Endothelial cell of umbilical vein (primary cell): ENCODE measurements at regions of chr16 and their contacts with region 1.

Region 1: GRCh38 chr16:19167710-19168370 is at the start of gene SYT17:
- DNase-seq: peak; percentile 65
- H3K4me3 ChIP-seq: peak within 1 kb of the TSS; percentile 7 to 45 (median 44)
- H3K27ac ChIP-seq: no peak within 1 kb of the TSS
- H3K4me1 ChIP-seq: peaks cover 3% of the 10 kb centered on the region
- H3K27me3 ChIP-seq: peaks cover 6 to 32% of the 10 kb centered on the region in 2 experiments
- CTCF ChIP-seq: peak; percentile 75 to 76
- POLR2A ChIP-seq: no peak
- total RNA-seq, gene SYT17: 1.8 and 1.9 TPM in 2 replicates

Region 2: GRCh38 chr16:19086322-19087199 is 81.3 kb before region 1 on chr16:
- CTCF ChIA-PET with region 1: interaction called, 6 read pairs
- POLR2A ChIA-PET with region 1: no interaction called
- dilution Hi-C with region 1: no loop called
- intact Hi-C with region 1: loop called (anchors 1 kb)
- DNase-seq: peak; percentile 95
- H3K4me3 ChIP-seq: peak overlapping the region; percentile 34 to 69 (median 41)
- H3K27ac ChIP-seq: peak overlapping the region; percentile 61
- H3K4me1 ChIP-seq: peaks cover 15% of the 10 kb centered on the region
- H3K27me3 ChIP-seq: no peaks in the 10 kb centered on the region
- CTCF ChIP-seq: peak; percentile 99
- POLR2A ChIP-seq: peak; percentile 94

Region 3: DNA sequence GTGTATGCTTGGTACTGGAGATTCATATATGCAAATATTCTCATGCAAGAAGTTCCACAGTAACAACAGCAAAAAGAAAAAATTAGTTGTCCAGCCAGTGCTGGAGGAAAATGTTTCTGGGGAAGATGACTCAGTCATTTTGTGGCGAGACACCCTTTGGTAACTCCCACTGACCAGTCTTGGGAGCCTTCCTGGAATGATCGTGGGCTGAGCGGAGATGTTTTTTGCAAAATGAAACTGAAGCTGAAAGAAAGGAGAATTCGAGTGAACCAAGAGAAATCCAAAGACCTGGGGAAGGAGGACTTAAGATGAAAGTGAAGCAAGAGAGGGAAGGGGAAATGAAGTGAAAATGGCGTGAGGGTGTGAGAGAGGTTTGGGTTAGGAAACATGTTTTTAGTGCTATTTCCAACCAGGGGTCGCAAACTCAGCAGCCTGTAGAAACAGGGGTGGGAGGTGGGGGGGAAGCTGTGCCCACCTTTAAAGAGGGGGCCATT is 48.9 kb before region 1 on chr16:
- CTCF ChIA-PET with region 1: interaction called, 3 read pairs
- POLR2A ChIA-PET with region 1: no interaction called
- dilution Hi-C with region 1: no loop called
- intact Hi-C with region 1: loop called (anchors 1 kb)
- DNase-seq: peak; percentile 88
- H3K4me3 ChIP-seq: peak overlapping the region; percentile 6 to 49 (median 7)
- H3K27ac ChIP-seq: peak overlapping the region; percentile 85
- H3K4me1 ChIP-seq: peaks cover 49% of the 10 kb centered on the region
- H3K27me3 ChIP-seq: no peaks in the 10 kb centered on the region
- CTCF ChIP-seq: no peak
- POLR2A ChIP-seq: no peak

Region 4: DNA sequence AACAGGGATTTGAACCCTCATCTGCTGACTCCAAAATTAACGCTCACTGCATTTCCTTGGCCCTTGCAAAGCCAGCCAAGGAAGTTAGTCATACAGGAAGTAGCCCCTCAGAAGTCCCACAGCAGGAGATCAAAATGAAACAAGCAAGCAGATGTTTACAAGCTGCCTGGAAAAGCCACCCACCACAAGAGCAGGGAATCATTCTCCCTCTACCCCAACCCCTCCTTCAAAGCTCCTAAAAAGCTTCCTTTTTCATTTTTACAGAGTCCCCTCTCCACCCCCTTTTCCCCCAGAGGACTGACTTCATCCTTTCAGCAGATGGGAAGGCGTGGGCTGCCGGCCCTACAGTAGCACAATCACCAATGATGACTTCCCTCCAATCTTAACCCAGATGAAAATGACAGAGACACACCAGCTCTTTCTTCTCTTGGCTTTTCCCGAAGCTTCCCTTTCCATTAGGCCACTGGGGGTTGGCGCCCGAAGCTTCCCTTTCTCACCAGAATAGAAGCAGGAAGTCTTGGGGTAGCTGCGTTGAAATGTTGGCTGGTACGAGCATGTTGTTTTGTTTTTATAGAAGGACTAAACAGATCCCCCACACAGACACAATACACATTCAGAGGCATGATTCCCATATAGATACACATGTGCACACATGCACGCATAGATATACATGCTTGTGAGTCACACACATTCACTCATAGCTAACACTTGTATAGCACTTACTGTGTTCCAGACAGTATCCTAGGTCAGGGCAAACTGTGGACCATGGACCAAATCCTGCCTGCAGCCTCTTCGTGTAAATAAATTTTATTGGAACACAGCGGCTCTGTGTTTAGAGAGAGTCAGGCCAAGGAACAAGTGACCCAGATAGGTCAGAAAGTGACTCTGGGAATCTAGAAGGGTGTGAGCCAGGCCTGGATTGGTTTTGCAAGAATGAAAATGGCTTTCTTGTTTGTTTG is 36.7 kb before region 1 on chr16:
- CTCF ChIA-PET with region 1: no interaction called
- POLR2A ChIA-PET with region 1: no interaction called
- dilution Hi-C with region 1: no loop called
- intact Hi-C with region 1: loop called (anchors 5 kb)
- DNase-seq: peak; percentile 61
- H3K4me3 ChIP-seq: peak overlapping the region in 2 of 3 experiments; percentile 10 to 43
- H3K27ac ChIP-seq: peak overlapping the region; percentile 99
- H3K4me1 ChIP-seq: peaks cover 22% of the 10 kb centered on the region
- H3K27me3 ChIP-seq: no peaks in the 10 kb centered on the region
- CTCF ChIP-seq: no peak
- POLR2A ChIP-seq: no peak

Region 5: DNA sequence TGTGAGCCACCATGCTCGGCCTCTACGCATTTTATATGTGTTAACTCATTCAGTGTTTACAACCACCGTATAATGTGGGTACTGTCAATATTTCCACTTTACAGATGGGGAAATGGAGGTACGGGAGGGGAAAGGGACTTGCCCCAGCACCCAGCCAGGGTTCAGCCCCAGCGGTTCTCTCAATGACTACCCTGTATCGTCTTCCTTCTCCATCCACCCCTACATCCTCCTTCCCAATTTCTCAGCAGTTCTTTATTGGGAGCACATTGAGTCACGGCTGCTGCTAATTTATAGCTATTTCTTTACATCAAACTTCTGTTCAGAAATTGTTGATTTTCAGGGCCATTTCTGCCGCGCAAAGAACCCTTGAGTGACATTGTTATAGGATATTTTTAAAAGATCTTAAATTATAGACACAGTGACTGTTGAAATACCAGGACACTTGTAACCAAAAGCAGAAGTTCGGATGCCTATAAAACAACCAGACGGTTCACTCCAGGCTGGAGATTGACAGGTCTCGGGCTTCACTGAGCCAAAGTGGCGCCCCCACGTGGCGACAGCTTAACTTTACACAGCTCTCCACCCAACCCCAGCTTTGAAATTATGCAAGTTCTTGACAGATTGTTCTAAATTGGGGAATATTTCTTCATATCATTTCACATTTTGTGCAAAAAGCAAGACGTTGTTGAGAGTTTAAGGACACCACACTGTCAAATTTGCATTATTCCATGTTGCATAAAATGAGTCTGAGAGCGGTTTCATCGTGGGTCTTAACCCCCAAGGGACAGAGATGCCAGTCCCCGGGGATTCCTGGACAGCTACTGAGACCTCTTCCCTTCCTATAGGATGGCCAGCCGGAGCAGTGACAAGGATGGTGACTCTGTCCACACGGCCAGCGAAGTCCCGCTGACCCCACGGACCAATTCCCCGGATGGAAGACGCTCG is 12.0 kb after region 1 on chr16:
- CTCF ChIA-PET with region 1: interaction called, 13 read pairs
- POLR2A ChIA-PET with region 1: no interaction called
- dilution Hi-C with region 1: no loop called
- intact Hi-C with region 1: loop called (anchors 2 kb)
- DNase-seq: peak; percentile 63
- H3K4me3 ChIP-seq: no peak overlapping the region
- H3K27ac ChIP-seq: no peak overlapping the region
- H3K4me1 ChIP-seq: peaks cover 2% of the 10 kb centered on the region
- H3K27me3 ChIP-seq: peaks cover 0 to 6% of the 10 kb centered on the region in 2 experiments
- CTCF ChIP-seq: peak; percentile 73 to 87
- POLR2A ChIP-seq: no peak

Region 6: DNA sequence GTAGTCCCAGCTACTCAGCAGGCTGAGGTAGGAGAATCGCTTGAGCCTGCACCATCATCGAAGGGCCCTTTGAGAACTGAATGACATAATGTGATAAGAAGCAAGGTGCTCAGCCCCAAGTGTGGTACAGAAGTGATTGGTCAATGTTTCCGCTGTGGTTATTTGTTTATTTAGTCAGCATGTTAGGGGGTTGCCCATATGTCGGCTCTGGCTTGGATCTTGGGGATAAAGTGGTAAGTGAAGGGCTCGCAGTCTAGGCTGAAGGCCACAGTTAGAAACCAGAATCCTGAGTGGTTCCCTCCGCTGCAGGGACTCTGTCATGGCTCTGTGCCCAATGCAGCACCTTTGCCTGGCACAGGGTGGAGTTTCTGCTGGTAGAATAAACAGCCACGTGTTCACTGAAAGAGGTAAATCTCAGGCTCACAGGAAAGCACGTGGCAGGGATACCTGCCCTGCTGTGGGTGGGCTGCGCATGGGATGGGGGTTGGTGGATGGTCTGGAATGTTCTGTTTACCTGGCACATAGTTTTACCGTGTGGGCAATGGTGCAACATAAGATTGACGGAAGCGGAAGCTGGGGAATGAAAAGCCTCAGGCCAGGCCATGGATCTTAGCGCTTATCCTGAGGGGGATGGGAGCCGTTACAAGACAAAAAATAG is 35.7 kb after region 1 on chr16:
- CTCF ChIA-PET with region 1: no interaction called
- POLR2A ChIA-PET with region 1: no interaction called
- dilution Hi-C with region 1: no loop called
- intact Hi-C with region 1: no loop called
- DNase-seq: no peak
- H3K4me3 ChIP-seq: no peak overlapping the region
- H3K27ac ChIP-seq: no peak overlapping the region
- H3K4me1 ChIP-seq: no peaks in the 10 kb centered on the region
- H3K27me3 ChIP-seq: no peaks in the 10 kb centered on the region
- CTCF ChIP-seq: no peak
- POLR2A ChIP-seq: no peak

Region 7: DNA sequence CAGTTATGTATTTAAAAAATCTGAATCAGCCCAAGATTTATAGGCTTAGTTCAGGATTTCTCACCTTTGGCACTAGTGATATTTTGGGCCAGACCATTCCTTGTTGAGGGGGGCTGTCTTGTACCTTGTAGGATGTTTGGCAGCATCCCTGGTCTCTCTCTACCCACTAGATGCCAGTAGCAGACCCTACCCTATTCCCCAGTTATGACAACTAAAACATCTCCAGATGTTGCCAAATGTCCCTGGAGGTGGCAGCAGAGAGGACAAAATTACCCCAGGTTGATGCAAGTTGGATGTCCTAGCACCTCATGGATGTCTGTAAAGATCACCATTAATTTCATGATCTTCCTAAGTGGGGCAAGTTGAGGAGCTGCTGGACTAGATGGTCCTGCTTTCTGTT is 46.0 kb after region 1 on chr16:
- CTCF ChIA-PET with region 1: no interaction called
- POLR2A ChIA-PET with region 1: no interaction called
- dilution Hi-C with region 1: no loop called
- intact Hi-C with region 1: no loop called
- DNase-seq: no peak
- H3K4me3 ChIP-seq: no peak overlapping the region
- H3K27ac ChIP-seq: no peak overlapping the region
- H3K4me1 ChIP-seq: no peaks in the 10 kb centered on the region
- H3K27me3 ChIP-seq: no peaks in the 10 kb centered on the region
- CTCF ChIP-seq: no peak
- POLR2A ChIP-seq: no peak

Region 8: DNA sequence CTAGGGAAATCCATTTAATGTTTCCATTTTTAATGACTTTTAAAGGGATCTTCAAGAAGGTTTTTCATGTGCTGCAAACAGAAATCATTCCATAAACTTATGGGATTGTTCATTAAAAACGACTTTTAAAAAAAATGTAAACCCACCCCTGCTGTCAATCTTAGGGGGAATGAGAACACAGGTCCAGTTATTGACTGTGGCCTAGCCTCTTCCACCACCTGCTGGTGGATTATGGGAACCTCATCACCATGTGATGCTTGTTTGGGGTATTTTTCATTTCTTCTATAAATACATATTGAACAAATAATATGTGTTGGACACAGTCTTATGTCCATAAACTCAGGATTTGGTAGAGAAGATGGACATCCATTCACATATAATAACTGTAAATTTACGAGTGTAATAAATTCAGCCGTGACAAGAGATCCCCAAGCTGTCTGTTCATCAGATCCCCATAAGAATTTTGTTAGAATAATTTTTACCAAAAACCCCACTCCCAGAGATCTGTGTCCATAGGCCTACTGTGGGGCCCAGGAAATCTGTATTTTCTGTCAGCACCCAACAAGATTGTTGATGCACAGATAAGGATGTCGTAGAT is 207.8 kb after region 1 on chr16:
- CTCF ChIA-PET with region 1: no interaction called
- POLR2A ChIA-PET with region 1: no interaction called
- dilution Hi-C with region 1: no loop called
- intact Hi-C with region 1: loop called (anchors 1 kb)
- DNase-seq: peak; percentile 71
- H3K4me3 ChIP-seq: no peak overlapping the region
- H3K27ac ChIP-seq: no peak overlapping the region
- H3K4me1 ChIP-seq: no peaks in the 10 kb centered on the region
- H3K27me3 ChIP-seq: peaks cover 0 to 3% of the 10 kb centered on the region in 2 experiments
- CTCF ChIP-seq: peak; percentile 59 to 67
- POLR2A ChIP-seq: no peak

Region 9: DNA sequence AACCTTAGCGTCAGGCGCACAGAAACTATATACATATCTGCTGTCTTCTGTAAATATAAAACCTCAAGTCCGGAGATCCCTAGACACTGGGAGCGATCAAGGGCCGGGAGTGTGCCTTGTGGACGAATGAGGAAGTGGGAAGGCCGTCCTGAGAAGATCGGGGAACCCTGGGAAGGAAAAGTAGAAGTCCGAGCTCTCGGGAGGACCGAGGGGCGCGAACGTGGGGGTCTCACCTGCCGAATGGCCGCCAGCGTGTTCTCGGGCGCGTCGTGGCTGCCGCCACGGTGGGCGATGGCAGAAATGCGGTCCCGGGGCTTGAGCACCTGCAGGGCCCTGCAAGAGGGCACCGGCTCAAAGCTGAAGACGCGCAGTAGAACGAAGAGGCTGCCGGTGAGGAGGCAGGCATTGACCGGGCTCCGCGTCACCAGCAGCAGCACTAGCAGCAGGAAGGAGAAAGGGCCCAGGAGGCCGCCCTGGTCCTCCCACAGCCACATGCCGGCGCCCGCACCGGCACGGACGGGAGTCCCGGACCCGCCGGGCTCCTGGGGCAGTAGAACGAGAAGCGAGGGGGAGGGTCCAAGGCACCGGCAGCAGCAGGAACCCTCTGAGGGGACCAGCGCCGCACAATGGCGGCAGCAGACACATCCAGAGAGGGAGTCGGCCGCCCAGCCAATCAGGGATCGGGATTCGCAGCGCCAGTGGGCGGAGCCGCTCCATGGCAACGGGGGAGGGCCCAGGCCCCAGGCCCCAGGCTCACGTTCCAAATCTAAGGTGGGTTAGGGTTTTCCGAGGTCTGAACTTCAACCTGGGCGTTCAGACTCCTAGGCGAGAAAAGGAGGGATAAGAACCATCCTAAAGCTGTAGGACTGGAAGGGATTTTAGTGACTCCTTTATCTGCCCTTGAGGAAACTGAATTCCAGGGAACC is 353.9 kb after region 1 on chr16 and contains the start of gene GDE1:
- CTCF ChIA-PET with region 1: no interaction called
- POLR2A ChIA-PET with region 1: no interaction called
- dilution Hi-C with region 1: no loop called
- intact Hi-C with region 1: loop called (anchors 5 kb)
- DNase-seq: peak; percentile 92
- H3K4me3 ChIP-seq: peak within 1 kb of the TSS; percentile 88 to 93 (median 89)
- H3K27ac ChIP-seq: peak within 1 kb of the TSS; percentile 50
- H3K4me1 ChIP-seq: peaks cover 21% of the 10 kb centered on the region
- H3K27me3 ChIP-seq: no peaks in the 10 kb centered on the region
- CTCF ChIP-seq: peak in 1 of 2 donors; percentile 64
- POLR2A ChIP-seq: peak; percentile 80
- total RNA-seq, gene GDE1: 50.5 and 51.5 TPM in 2 replicates